PC-3 (cell line): ENCODE measurements at regions of chr5 and their contacts with region 1.

Region 1: DNA sequence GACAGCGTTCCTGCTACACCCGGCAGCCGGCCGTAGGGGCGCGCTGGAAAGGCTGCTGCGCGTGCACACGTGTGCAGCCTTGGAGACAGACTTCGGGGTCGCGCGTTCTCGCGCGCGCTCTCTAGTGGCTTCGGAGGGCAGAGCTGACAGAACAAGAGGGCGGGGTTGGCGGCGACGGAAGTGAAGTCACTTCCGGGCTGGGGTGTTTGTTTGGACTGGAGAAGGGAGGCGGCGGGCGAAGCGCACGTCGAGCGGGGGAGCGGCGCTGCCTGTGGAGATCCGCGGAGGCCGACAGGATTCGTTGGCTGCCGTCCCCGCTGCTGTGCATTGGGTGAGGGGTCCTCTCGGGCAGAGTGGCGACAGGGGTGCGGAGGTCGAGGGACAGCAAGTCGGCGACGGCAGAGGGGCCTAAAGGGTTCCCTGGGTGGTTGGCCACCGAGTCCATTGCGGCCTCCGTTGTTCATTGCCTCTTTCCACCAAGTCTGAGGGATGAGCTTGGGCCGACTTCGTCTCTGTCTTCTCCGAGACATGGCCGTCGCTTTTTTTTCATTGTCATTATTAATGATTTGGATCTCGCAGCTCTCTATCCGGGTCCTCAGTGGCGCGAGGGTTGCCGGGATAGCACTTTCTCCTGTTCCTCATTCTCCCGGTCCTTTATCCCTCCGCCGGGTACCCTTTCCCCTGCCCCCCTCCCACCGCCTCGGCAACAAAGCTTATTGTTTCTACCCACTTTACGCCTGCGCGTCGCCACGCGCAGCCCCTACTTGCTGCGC is at the start of gene PAIP2:
- DNase-seq: peak; percentile 95
- ATAC-seq: peak; percentile 78
- H3K4me3 ChIP-seq: peak within 1 kb of the TSS; percentile 96
- H3K27ac ChIP-seq: peak within 1 kb of the TSS; percentile 93
- H3K4me1 ChIP-seq: peaks cover 18% of the 10 kb centered on the region
- H3K27me3 ChIP-seq: no peaks in the 10 kb centered on the region
- CTCF ChIP-seq: peak; percentile 63
- total RNA-seq, gene PAIP2: 35.1 and 39.3 TPM in 2 replicates

Region 2: DNA sequence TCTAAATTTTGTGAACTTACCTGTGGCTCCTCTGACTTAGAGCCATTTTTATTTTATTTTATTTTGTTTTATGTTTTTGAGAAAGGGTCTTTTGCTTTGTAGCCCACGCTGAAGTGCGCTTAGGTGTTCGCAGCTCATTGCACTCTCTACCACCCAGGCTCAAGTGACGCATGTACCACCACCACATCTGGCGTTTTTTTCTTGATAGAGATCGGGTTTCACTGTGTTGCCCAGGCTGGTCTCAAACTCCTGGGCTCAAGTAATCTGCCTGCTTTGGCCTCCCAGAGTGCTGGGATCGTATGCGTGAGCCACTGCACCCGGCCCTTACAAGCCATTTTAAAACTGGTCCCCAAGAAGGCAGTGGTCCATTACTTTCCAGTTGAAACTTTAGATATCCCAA is 29.8 kb before region 1 on chr5:
- CTCF ChIA-PET with region 1: interaction called, 11 read pairs
- POLR2A ChIA-PET with region 1: no interaction called
- intact Hi-C with region 1: no loop called
- DNase-seq: no peak
- ATAC-seq: no peak
- H3K4me3 ChIP-seq: no peak overlapping the region
- H3K27ac ChIP-seq: no peak overlapping the region
- H3K4me1 ChIP-seq: peaks cover 12% of the 10 kb centered on the region; the same call in 1 of the 2 replicates
- H3K27me3 ChIP-seq: no peaks in the 10 kb centered on the region
- CTCF ChIP-seq: no peak

Region 3: DNA sequence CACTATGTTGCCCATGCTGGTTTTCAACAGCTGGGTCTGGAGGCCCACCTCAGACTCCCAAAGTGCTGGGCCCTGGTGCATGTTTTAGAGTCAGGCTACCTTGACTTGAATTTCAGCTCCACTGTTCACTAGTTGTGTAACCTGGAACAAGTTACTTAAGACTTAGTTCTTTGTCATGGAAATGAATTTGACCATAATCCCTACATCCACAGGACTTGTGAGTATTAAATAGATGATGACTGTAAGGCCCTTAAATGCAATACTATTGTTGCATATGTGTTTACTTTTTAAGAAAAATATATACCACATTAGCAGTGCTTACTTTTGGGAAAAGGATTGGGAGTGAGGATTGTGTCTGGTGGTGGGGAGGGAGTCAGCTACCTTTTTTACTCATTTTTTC is 16.2 kb after region 1 on chr5:
- CTCF ChIA-PET with region 1: no interaction called
- POLR2A ChIA-PET with region 1: interaction called, 20 read pairs
- intact Hi-C with region 1: no loop called
- DNase-seq: no peak
- ATAC-seq: no peak
- H3K4me3 ChIP-seq: no peak overlapping the region
- H3K27ac ChIP-seq: no peak overlapping the region
- H3K4me1 ChIP-seq: peaks cover 11% of the 10 kb centered on the region
- H3K27me3 ChIP-seq: no peaks in the 10 kb centered on the region
- CTCF ChIP-seq: no peak

Region 4: DNA sequence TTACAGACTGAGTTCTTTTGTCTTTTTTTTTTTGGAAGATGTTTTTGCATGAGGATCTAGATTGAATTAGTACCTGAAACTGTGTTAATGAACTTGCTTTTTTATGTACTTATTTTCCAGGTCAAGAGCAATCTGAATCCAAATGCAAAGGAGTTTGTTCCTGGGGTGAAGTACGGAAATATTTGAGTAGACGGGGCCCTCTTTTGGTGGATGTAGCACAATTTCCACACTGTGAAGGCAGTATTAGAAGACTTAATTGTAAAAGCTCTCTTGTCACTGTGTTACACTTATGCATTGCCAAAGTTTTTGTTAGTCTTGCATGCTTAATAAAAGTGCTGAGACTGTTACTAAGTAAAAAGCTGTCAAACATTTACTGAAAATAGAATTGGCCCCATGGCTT is 26.8 kb after region 1 on chr5:
- CTCF ChIA-PET with region 1: no interaction called
- POLR2A ChIA-PET with region 1: interaction called, 4 read pairs
- intact Hi-C with region 1: loop called (anchors 2 kb)
- DNase-seq: no peak
- ATAC-seq: no peak
- H3K4me3 ChIP-seq: no peak overlapping the region
- H3K27ac ChIP-seq: no peak overlapping the region
- H3K4me1 ChIP-seq: peaks cover 15% of the 10 kb centered on the region
- H3K27me3 ChIP-seq: no peaks in the 10 kb centered on the region
- CTCF ChIP-seq: peak; percentile 26; the same call in 1 of the 2 replicates

Region 5: GRCh38 chr5:139392678-139393496 is 51.1 kb after region 1 on chr5:
- CTCF ChIA-PET with region 1: no interaction called
- POLR2A ChIA-PET with region 1: interaction called, 5 read pairs
- intact Hi-C with region 1: loop called (anchors 1 kb)
- DNase-seq: peak; percentile 79
- ATAC-seq: peak; percentile 71
- H3K4me3 ChIP-seq: peak overlapping the region; percentile 87
- H3K27ac ChIP-seq: peak overlapping the region; percentile 98
- H3K4me1 ChIP-seq: peaks cover 20% of the 10 kb centered on the region
- H3K27me3 ChIP-seq: no peaks in the 10 kb centered on the region
- CTCF ChIP-seq: peak; percentile 66

Region 6: GRCh38 chr5:140025736-140026135 is 683.9 kb after region 1 on chr5:
- CTCF ChIA-PET with region 1: no interaction called
- POLR2A ChIA-PET with region 1: no interaction called
- intact Hi-C with region 1: no loop called
- DNase-seq: no peak
- ATAC-seq: 0 out of 2 replicates have a peak, but pooled peaks have one; percentile 21
- H3K4me3 ChIP-seq: no peak overlapping the region
- H3K27ac ChIP-seq: no peak overlapping the region
- H3K4me1 ChIP-seq: peaks cover 15% of the 10 kb centered on the region
- H3K27me3 ChIP-seq: no peaks in the 10 kb centered on the region
- CTCF ChIP-seq: no peak